ENCODE measurements at regions of chr6 and their contacts with region 1.

Region 1: DNA sequence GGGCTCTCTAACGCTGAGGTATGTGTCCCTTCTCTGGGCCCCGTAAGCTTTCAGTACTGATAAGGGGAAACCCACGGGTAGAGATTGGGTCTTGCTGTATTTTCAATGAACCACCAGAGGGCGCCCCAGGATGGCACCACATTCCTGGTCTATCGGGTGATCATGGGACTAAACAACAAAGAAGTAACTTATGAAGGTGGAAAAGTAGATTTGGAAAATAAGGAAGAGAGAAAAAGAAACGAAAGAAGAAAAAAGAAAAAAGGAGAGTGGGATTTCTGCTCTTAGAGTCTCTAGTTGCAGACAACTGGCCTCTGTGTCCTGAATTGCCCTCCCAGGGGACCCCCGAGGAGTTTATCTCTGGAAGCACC is 93.8 kb downstream of the GMPR start:
- DNase-seq: no peak
- H3K4me3 ChIP-seq: no peak overlapping the region
- H3K27ac ChIP-seq: no peak overlapping the region
- H3K27me3 ChIP-seq: no peaks in the 10 kb centered on the region
- CTCF ChIP-seq: peak; percentile 89

Region 2: DNA sequence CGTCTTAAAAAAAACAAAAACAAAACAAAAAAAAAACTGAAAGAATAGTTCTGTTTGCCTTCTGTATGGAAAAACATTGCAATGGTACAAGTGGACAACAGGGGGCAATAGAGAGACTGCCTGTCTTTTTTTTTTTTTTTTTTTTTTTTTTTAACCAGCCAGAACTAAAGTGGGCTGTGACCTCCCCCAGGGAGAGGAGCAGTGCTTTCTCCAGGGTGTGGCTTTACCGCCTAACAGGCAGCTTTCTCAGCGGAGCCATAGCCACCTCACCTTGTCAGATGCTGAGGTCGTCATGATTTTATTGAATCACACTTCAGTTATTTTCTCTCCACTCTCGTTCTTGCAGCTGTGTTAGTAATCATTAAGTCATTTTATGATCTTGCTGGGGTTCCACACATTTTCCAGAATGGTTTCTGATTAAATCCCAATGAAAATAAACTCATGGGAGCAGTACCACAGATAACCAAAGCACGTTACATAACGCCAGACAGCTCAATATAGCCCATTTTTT is 15.4 kb before region 1 on chr6:
- CTCF ChIA-PET with region 1: interaction called, 14 read pairs
- POLR2A ChIA-PET with region 1: interaction called, 3 read pairs
- DNase-seq: no peak
- H3K4me3 ChIP-seq: no peak overlapping the region
- H3K27ac ChIP-seq: no peak overlapping the region
- H3K27me3 ChIP-seq: no peaks in the 10 kb centered on the region
- CTCF ChIP-seq: peak; percentile 89

Region 3: DNA sequence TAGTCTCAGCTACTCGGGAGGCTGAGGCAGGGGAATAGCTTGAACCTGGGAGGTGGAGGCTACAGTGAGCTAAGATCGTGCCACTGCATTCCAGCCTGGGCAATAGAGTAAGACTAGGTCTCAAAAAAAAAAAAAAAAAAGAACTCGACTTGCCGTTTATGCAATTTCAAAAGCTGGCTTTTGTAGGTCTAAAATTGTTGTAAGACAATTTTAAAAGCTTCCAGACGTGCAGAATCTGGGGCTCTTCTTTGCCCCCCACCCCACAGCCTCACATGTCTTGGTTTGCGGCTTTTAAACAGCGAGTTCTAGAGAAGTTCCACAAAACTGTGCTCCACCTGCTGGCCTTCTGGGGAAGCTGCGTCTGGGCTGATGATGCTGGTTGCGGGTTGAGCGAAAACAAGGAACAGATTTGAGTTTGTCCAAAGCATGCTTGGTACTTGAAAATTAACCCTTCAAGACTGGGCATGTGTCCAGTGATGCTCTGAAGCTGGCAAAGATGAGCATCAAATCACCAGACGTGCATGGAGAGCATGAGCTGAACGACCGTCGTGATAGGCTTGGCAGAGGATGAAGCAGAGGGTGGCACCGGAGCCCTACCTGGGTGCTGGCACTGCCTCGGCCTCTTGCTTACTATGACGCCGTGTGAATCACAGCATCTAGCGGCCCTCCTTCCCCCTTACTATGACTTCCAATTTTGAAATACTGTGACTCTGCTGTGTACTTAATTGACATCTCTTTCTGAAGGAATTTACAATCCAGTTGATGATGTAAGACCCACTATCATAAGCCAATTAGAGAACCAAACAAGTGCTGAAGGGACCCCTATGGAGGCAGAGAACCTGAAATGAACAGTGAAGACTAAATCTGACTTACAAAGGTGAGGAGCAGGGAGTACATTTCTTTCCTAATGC is 77.6 kb after region 1 on chr6:
- CTCF ChIA-PET with region 1: interaction called, 21 read pairs
- POLR2A ChIA-PET with region 1: no interaction called
- DNase-seq: no peak
- H3K4me3 ChIP-seq: no peak overlapping the region
- H3K27ac ChIP-seq: no peak overlapping the region
- H3K27me3 ChIP-seq: no peaks in the 10 kb centered on the region
- CTCF ChIP-seq: peak; percentile 84

Region 4: DNA sequence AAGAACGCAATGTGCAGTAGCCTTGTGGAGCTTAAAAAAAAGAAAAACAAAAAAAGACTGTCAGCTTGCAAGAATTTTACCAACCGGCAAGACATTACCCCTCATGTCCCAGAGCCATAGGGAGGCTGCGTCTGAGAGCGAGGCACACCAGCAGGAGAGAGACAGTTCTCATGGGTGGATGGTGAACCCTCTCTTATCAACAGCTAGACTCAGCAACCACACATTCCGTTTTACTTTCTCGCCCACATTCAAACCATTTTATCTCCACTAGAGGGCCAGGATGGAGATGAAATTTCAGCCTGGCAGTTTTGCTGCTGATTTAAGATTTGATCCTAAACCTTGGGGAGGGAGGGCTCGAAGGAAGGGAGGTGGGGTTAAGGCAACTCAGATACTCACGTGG is 182.1 kb after region 1 on chr6:
- CTCF ChIA-PET with region 1: interaction called, 33 read pairs
- POLR2A ChIA-PET with region 1: no interaction called
- DNase-seq: peak; percentile 32
- H3K4me3 ChIP-seq: no peak overlapping the region
- H3K27ac ChIP-seq: no peak overlapping the region
- H3K27me3 ChIP-seq: no peaks in the 10 kb centered on the region
- CTCF ChIP-seq: peak; percentile 67

Region 5: GRCh38 chr6:16982807-16983206 is 650.6 kb after region 1 on chr6:
- CTCF ChIA-PET with region 1: no interaction called
- POLR2A ChIA-PET with region 1: interaction called, 13 read pairs
- DNase-seq: peak; percentile 98
- H3K4me3 ChIP-seq: no peak overlapping the region
- H3K27ac ChIP-seq: no peak overlapping the region
- H3K27me3 ChIP-seq: no peaks in the 10 kb centered on the region
- CTCF ChIP-seq: no peak